Activated B cell treated with CpG ODN at 0.5 μM for 24 hours (primary cell): ENCODE measurements at regions of chr17 and their contacts with region 1.

Region 1: GRCh38 chr17:38702166-38702899 is 2.7 kb upstream of the MLLT6 start:
- DNase-seq: peak; percentile 77
- ATAC-seq: peak; percentile 28
- H3K4me3 Mint-ChIP-seq: peak overlapping the region; percentile 96
- H3K27ac Mint-ChIP-seq: peak overlapping the region; percentile 99
- H3K4me1 Mint-ChIP-seq: peaks cover 48% of the 10 kb centered on the region
- H3K27me3 Mint-ChIP-seq: no peaks in the 10 kb centered on the region
- CTCF ChIP-seq: no peak

Region 2: GRCh38 chr17:38674749-38675615 is 27.4 kb before region 1 on chr17 and contains the start of gene EPOP:
- CTCF ChIA-PET with region 1: interaction called, 13 read pairs
- POLR2A ChIA-PET with region 1: interaction called, 7 read pairs
- intact Hi-C with region 1: loop called (anchors 1 kb)
- DNase-seq: peak; percentile 79
- ATAC-seq: peak; percentile 88
- H3K4me3 Mint-ChIP-seq: peak within 1 kb of the TSS; percentile 70
- H3K27ac Mint-ChIP-seq: no peak within 1 kb of the TSS
- H3K4me1 Mint-ChIP-seq: peaks cover 32% of the 10 kb centered on the region
- H3K27me3 Mint-ChIP-seq: peaks cover 29% of the 10 kb centered on the region
- CTCF ChIP-seq: no peak
- total RNA-seq, gene EPOP: 2.8 and 3.0 TPM in 2 replicates

Region 3: GRCh38 chr17:38729886-38730525 is 27.7 kb after region 1 on chr17 and contains the start of gene CISD3:
- CTCF ChIA-PET with region 1: interaction called, 10 read pairs
- POLR2A ChIA-PET with region 1: interaction called, 73 read pairs
- intact Hi-C with region 1: loop called (anchors 1 kb)
- DNase-seq: peak; percentile 91
- ATAC-seq: peak; percentile 91
- H3K4me3 Mint-ChIP-seq: peak within 1 kb of the TSS; percentile 82
- H3K27ac Mint-ChIP-seq: peak within 1 kb of the TSS; percentile 79
- H3K4me1 Mint-ChIP-seq: peaks cover 58% of the 10 kb centered on the region
- H3K27me3 Mint-ChIP-seq: no peaks in the 10 kb centered on the region
- CTCF ChIP-seq: no peak
- total RNA-seq, gene CISD3: 11.2 and 12.1 TPM in 2 replicates

Region 4: GRCh38 chr17:38735161-38735997 is 33.0 kb after region 1 on chr17:
- CTCF ChIA-PET with region 1: interaction called, 10 read pairs
- POLR2A ChIA-PET with region 1: interaction called, 31 read pairs
- intact Hi-C with region 1: loop called (anchors 1 kb)
- DNase-seq: peak; percentile 76
- ATAC-seq: peak; percentile 39
- H3K4me3 Mint-ChIP-seq: no peak overlapping the region
- H3K27ac Mint-ChIP-seq: no peak overlapping the region
- H3K4me1 Mint-ChIP-seq: peaks cover 26% of the 10 kb centered on the region
- H3K27me3 Mint-ChIP-seq: peaks cover 5% of the 10 kb centered on the region
- CTCF ChIP-seq: no peak

Region 5: GRCh38 chr17:38799378-38800236 is 97.3 kb after region 1 on chr17 and contains the start of gene PIP4K2B:
- CTCF ChIA-PET with region 1: no interaction called
- POLR2A ChIA-PET with region 1: interaction called, 6 read pairs
- intact Hi-C with region 1: loop called (anchors 1 kb)
- DNase-seq: peak; percentile 86
- ATAC-seq: peak; percentile 85
- H3K4me3 Mint-ChIP-seq: peak within 1 kb of the TSS; percentile 88
- H3K27ac Mint-ChIP-seq: peak within 1 kb of the TSS; percentile 87
- H3K4me1 Mint-ChIP-seq: peaks cover 32% of the 10 kb centered on the region
- H3K27me3 Mint-ChIP-seq: no peaks in the 10 kb centered on the region
- CTCF ChIP-seq: no peak
- total RNA-seq, gene PIP4K2B: 32.1 and 33.0 TPM in 2 replicates